Mucosa of descending colon (tissue), 3 donors: ENCODE measurements at regions of chr17 and their contacts with region 1.

Region 1: GRCh38 chr17:78421484-78422266 is 43.2 kb downstream of the PGS1 start:
- DNase-seq: peak; percentile 83 to 87 (median 84)
- ATAC-seq: peak; percentile 91
- H3K4me3 ChIP-seq: no peak overlapping the region
- H3K4me1 ChIP-seq: peaks cover 8% of the 10 kb centered on the region
- CTCF ChIP-seq: peak; percentile 95

Region 2: GRCh38 chr17:78250891-78251794 is 170.5 kb before region 1 on chr17:
- intact Hi-C with region 1: loop called in 1 of 2 experiments (anchors 10 kb)
- DNase-seq: peak; percentile 84 to 92 (median 90)
- ATAC-seq: peak; percentile 88
- H3K4me3 ChIP-seq: no peak overlapping the region
- H3K4me1 ChIP-seq: peaks cover 21% of the 10 kb centered on the region
- CTCF ChIP-seq: peak; percentile 98

Region 3: DNA sequence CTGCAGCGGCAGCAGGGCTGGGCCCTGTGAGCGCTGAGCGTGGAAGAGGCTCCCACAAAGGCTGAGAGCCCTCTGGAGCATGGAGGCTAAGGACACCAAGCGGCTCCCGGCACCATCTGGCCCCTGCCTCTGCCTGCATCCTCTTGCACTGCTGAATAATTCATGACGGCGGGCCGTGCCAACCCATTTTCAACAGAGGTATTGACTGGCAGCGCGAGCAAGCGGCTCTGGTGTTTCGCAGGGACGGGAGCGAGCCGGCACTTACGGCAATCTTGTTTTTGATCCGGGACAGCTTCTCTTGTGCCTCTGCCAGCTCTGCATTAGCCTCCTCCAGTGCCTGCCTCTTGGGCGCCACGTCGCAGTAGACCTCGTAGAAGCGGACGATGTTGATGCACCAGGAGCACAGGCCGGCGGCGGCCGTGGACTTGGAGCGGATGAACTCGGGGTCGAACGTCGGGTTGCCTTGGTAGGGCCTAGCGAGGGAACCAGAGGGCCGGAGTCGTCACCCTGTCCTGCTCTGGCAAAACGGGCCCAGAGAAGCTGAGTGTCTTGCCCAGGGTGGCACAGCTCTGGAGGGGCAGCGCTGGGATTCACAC is 37.2 kb after region 1 on chr17:
- intact Hi-C with region 1: no loop called
- DNase-seq: no peak
- ATAC-seq: no peak
- H3K4me3 ChIP-seq: no peak overlapping the region
- H3K4me1 ChIP-seq: no peaks in the 10 kb centered on the region
- CTCF ChIP-seq: no peak

Region 4: GRCh38 chr17:78665952-78666920 is 244.6 kb after region 1 on chr17:
- intact Hi-C with region 1: no loop called
- DNase-seq: peak in 1 of 3 donors; percentile 36
- ATAC-seq: peak; percentile 22
- H3K4me3 ChIP-seq: no peak overlapping the region
- H3K4me1 ChIP-seq: peaks cover 8% of the 10 kb centered on the region
- CTCF ChIP-seq: no peak